ENCODE measurements at regions of chr14 and their contacts with region 1.

Region 1: GRCh38 chr14:58637391-58638230 is at the start of gene DACT1:
- DNase-seq: peak in 8 of 10 donors; percentile 40 to 74 (median 61)
- H3K4me3 ChIP-seq: peak within 1 kb of the TSS; percentile 57 to 98 (median 80)
- H3K27ac ChIP-seq: peak within 1 kb of the TSS; percentile 15 to 96 (median 87)
- H3K27me3 ChIP-seq: no peaks in the 10 kb centered on the region
- CTCF ChIP-seq: peak in 8 of 56 donors; percentile 5 to 35 (median 22)
- total RNA-seq, gene DACT1: 5.1 to 16.0 (median 9.1) TPM

Region 2: GRCh38 chr14:58107947-58108552 is 529.6 kb before region 1 on chr14:
- intact Hi-C with region 1: loop called in 1 of 2 experiments (anchors 10 kb)
- DNase-seq: peak in 4 of 10 donors; percentile 31 to 62 (median 42)
- H3K4me3 ChIP-seq: no peak overlapping the region
- H3K27ac ChIP-seq: no peak overlapping the region
- H3K27me3 ChIP-seq: no peaks in the 10 kb centered on the region
- CTCF ChIP-seq: peak; percentile 41 to 97 (median 81)

Region 3: DNA sequence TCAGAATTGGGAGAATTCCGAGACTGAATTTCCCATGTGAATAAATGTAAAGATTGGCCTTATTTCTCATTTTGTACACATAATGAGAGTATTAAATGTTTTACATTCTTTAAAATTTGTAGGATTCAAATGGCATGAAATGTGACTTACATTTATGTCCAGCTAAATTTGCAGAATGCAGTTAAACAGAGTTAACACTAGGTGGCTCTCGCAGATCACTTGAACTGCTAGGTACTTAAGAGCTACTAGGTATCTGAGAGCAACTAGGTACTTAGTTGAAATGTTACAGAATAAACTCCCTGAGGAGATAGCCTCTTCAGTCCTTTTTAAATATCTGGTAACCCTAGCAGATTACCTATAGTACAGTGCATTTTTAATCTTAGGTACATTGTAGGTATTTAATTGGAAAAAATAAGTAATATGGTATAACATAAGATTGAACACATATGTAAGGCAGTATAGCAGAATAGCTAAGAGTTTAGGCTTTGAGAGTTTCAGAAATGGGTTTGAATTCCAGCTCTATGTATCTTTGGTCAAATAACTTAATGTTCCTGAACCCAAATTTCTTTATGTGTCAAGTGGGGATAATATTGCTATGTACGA is 136.3 kb before region 1 on chr14:
- intact Hi-C with region 1: loop called (anchors 2 to 5 kb)
- DNase-seq: peak in 2 of 10 donors; percentile 26 to 41
- H3K4me3 ChIP-seq: no peak overlapping the region
- H3K27ac ChIP-seq: no peak overlapping the region
- H3K27me3 ChIP-seq: no peaks in the 10 kb centered on the region
- CTCF ChIP-seq: peak; percentile 70 to 97 (median 84)

Region 4: GRCh38 chr14:58752771-58753201 is 115.2 kb after region 1 on chr14:
- intact Hi-C with region 1: loop called in 1 of 2 experiments (anchors 10 kb)
- DNase-seq: peak in 9 of 10 donors; percentile 34 to 78 (median 60)
- H3K4me3 ChIP-seq: peak overlapping the region in 8 of 59 donors; percentile 4 to 44 (median 12)
- H3K27ac ChIP-seq: peak overlapping the region in 51 of 59 donors; percentile 2 to 83 (median 56)
- H3K27me3 ChIP-seq: no peaks in the 10 kb centered on the region
- CTCF ChIP-seq: no peak

Region 5: GRCh38 chr14:58844544-58844943 is 206.9 kb after region 1 on chr14:
- intact Hi-C with region 1: no loop called
- DNase-seq: no peak
- H3K4me3 ChIP-seq: no peak overlapping the region
- H3K27ac ChIP-seq: no peak overlapping the region
- H3K27me3 ChIP-seq: no peaks in the 10 kb centered on the region
- CTCF ChIP-seq: no peak

Region 6: GRCh38 chr14:58882577-58883018 is 245.0 kb after region 1 on chr14:
- intact Hi-C with region 1: loop called in 1 of 2 experiments (anchors 10 kb)
- DNase-seq: no peak
- H3K4me3 ChIP-seq: no peak overlapping the region
- H3K27ac ChIP-seq: no peak overlapping the region
- H3K27me3 ChIP-seq: no peaks in the 10 kb centered on the region
- CTCF ChIP-seq: no peak

Region 7: GRCh38 chr14:59055439-59056045 is 417.9 kb after region 1 on chr14:
- intact Hi-C with region 1: loop called (anchors 2 to 10 kb)
- DNase-seq: peak in 3 of 10 donors; percentile 10 to 59 (median 47)
- H3K4me3 ChIP-seq: no peak overlapping the region
- H3K27ac ChIP-seq: no peak overlapping the region
- H3K27me3 ChIP-seq: peaks cover 0 to 3% (median 0%) of the 10 kb centered on the region in 45 donors
- CTCF ChIP-seq: peak; percentile 28 to 95 (median 78)

Measured in dorsolateral prefrontal cortex (tissue), 120 donors.